ENCODE measurements at regions of chr19 and their contacts with region 1.

Region 1: GRCh38 chr19:47357788-47358680 is 8.9 kb downstream of the DHX34 start:
- DNase-seq: no peak

Region 2: GRCh38 chr19:47389150-47389556 is 31.1 kb after region 1 on chr19:
- CTCF ChIA-PET with region 1: interaction called, 10 read pairs
- POLR2A ChIA-PET with region 1: no interaction called
- DNase-seq: no peak